GM12878 (cell line): ENCODE measurements at regions of chr6 and their contacts with region 1.

Region 1: GRCh38 chr6:167910016-167910415 is 83.3 kb downstream of the AFDN start:
- DNase-seq: no peak
- ATAC-seq: no peak
- H3K4me3 ChIP-seq: no peak overlapping the region
- H3K27ac ChIP-seq: no peak overlapping the region
- H3K4me1 ChIP-seq: no peaks in the 10 kb centered on the region
- H3K27me3 ChIP-seq: no peaks in the 10 kb centered on the region
- CTCF ChIP-seq: no peak
- EP300 ChIP-seq: no peak
- POLR2A ChIP-seq: no peak
- RAD21 ChIP-seq: no peak

Region 2: DNA sequence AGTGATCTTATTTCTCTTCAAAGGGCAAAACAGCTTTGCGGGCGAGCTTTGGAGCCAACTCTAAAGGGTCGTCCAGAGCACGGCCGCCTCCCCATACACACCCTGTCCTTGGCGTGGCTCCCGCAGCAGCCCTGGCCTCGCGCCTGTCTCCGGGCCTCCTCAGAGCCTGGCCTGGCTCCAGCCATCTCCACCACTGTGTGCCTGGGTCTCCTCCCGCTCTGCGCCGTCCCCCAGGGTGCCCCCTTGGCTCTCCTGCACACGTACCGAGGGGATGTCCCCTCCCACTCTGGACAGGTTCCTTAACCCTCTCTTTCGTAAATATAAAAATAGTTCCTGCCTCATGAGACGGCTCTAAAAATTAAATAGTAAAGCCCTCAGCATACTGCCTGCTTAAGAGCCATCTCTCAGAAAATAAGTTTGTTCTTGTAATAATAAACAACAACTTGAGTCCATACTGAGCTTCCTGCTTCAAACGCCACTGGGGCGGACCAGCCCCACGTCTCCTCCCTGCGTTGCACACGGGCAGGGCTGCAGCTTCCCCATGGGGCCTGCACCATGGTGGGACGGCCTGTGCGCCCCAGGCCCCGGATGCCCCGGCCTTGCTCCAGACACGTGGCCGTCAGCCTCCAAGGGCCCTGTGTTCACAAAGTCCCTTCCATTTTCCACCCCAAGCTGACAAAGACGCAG is 358.9 kb before region 1 on chr6:
- CTCF ChIA-PET with region 1: no interaction called
- POLR2A ChIA-PET with region 1: no interaction called
- RAD21 ChIA-PET with region 1: no interaction called
- SMC1A ChIA-PET with region 1: no interaction called
- in situ Hi-C with region 1: no loop called
- intact Hi-C with region 1: loop called (anchors 5 kb)
- DNase-seq: no peak
- ATAC-seq: no peak
- H3K4me3 ChIP-seq: no peak overlapping the region
- H3K27ac ChIP-seq: no peak overlapping the region
- H3K4me1 ChIP-seq: no peaks in the 10 kb centered on the region
- H3K27me3 ChIP-seq: no peaks in the 10 kb centered on the region
- CTCF ChIP-seq: no peak
- EP300 ChIP-seq: no peak
- POLR2A ChIP-seq: no peak
- RAD21 ChIP-seq: no peak